CD4-positive, alpha-beta memory T cell (primary cell): ENCODE measurements at regions of chrX and their contacts with region 1.

Region 1: GRCh38 chrX:79107891-79108718 is 36.4 kb upstream of the GPR174 start:
- DNase-seq: peak in 4 of 5 donors; percentile 71 to 81 (median 75)
- H3K4me3 ChIP-seq: peak overlapping the region in 1 of 2 donors; percentile 28
- H3K4me3 Mint-ChIP-seq: peak overlapping the region; percentile 54 to 82 (median 74)
- H3K27ac ChIP-seq: peak overlapping the region; percentile 95
- H3K27ac Mint-ChIP-seq: peak overlapping the region; percentile 96 to 99 (median 97)
- H3K4me1 ChIP-seq: peaks cover 68% of the 10 kb centered on the region
- H3K4me1 Mint-ChIP-seq: peaks cover 27 to 70% (median 47%) of the 10 kb centered on the region in 4 donors
- H3K27me3 ChIP-seq: no peaks in the 10 kb centered on the region
- H3K27me3 Mint-ChIP-seq: no peaks in the 10 kb centered on the region

Region 2: GRCh38 chrX:78725287-78725686 is 382.8 kb before region 1 on chrX:
- CTCF ChIA-PET with region 1: no interaction called
- POLR2A ChIA-PET with region 1: no interaction called
- intact Hi-C with region 1: no loop called
- DNase-seq: no peak
- H3K4me3 ChIP-seq: no peak overlapping the region
- H3K4me3 Mint-ChIP-seq: no peak overlapping the region
- H3K27ac ChIP-seq: no peak overlapping the region
- H3K27ac Mint-ChIP-seq: no peak overlapping the region
- H3K4me1 ChIP-seq: no peaks in the 10 kb centered on the region
- H3K4me1 Mint-ChIP-seq: peaks cover 0 to 4% (median 0%) of the 10 kb centered on the region in 4 donors
- H3K27me3 ChIP-seq: no peaks in the 10 kb centered on the region
- H3K27me3 Mint-ChIP-seq: no peaks in the 10 kb centered on the region

Region 3: GRCh38 chrX:79089896-79090584 is 18.1 kb before region 1 on chrX:
- CTCF ChIA-PET with region 1: interaction called, 4 read pairs
- POLR2A ChIA-PET with region 1: interaction called, 42 read pairs
- intact Hi-C with region 1: no loop called
- DNase-seq: no peak
- H3K4me3 ChIP-seq: no peak overlapping the region
- H3K4me3 Mint-ChIP-seq: peak overlapping the region in 3 of 8 donors; percentile 3 to 43 (median 36)
- H3K27ac ChIP-seq: no peak overlapping the region
- H3K27ac Mint-ChIP-seq: peak overlapping the region; percentile 36 to 89 (median 78)
- H3K4me1 ChIP-seq: peaks cover 60% of the 10 kb centered on the region
- H3K4me1 Mint-ChIP-seq: peaks cover 13 to 57% (median 28%) of the 10 kb centered on the region in 4 donors
- H3K27me3 ChIP-seq: no peaks in the 10 kb centered on the region
- H3K27me3 Mint-ChIP-seq: no peaks in the 10 kb centered on the region

Region 4: GRCh38 chrX:79138658-79139241 is 30.6 kb after region 1 on chrX:
- CTCF ChIA-PET with region 1: interaction called, 12 read pairs
- POLR2A ChIA-PET with region 1: interaction called, 161 read pairs
- intact Hi-C with region 1: loop called (anchors 2 kb)
- DNase-seq: peak in 1 of 5 donors; percentile 24
- H3K4me3 ChIP-seq: no peak overlapping the region
- H3K4me3 Mint-ChIP-seq: peak overlapping the region; percentile 24 to 73 (median 48)
- H3K27ac ChIP-seq: peak overlapping the region; percentile 49
- H3K27ac Mint-ChIP-seq: peak overlapping the region; percentile 32 to 89 (median 84)
- H3K4me1 ChIP-seq: peaks cover 52% of the 10 kb centered on the region
- H3K4me1 Mint-ChIP-seq: peaks cover 22 to 59% (median 41%) of the 10 kb centered on the region in 4 donors
- H3K27me3 ChIP-seq: no peaks in the 10 kb centered on the region
- H3K27me3 Mint-ChIP-seq: no peaks in the 10 kb centered on the region

Region 5: GRCh38 chrX:79161655-79162054 is 53.5 kb after region 1 on chrX:
- CTCF ChIA-PET with region 1: no interaction called
- POLR2A ChIA-PET with region 1: interaction called, 41 read pairs
- intact Hi-C with region 1: loop called (anchors 1 kb)
- DNase-seq: peak; percentile 73 to 85 (median 79)
- H3K4me3 ChIP-seq: peak overlapping the region; percentile 45 to 55
- H3K4me3 Mint-ChIP-seq: peak overlapping the region; percentile 75 to 97 (median 94)
- H3K27ac ChIP-seq: peak overlapping the region; percentile 51
- H3K27ac Mint-ChIP-seq: peak overlapping the region; percentile 87 to 98 (median 95)
- H3K4me1 ChIP-seq: peaks cover 90% of the 10 kb centered on the region
- H3K4me1 Mint-ChIP-seq: peaks cover 37 to 85% (median 53%) of the 10 kb centered on the region in 4 donors
- H3K27me3 ChIP-seq: no peaks in the 10 kb centered on the region
- H3K27me3 Mint-ChIP-seq: no peaks in the 10 kb centered on the region

Region 6: DNA sequence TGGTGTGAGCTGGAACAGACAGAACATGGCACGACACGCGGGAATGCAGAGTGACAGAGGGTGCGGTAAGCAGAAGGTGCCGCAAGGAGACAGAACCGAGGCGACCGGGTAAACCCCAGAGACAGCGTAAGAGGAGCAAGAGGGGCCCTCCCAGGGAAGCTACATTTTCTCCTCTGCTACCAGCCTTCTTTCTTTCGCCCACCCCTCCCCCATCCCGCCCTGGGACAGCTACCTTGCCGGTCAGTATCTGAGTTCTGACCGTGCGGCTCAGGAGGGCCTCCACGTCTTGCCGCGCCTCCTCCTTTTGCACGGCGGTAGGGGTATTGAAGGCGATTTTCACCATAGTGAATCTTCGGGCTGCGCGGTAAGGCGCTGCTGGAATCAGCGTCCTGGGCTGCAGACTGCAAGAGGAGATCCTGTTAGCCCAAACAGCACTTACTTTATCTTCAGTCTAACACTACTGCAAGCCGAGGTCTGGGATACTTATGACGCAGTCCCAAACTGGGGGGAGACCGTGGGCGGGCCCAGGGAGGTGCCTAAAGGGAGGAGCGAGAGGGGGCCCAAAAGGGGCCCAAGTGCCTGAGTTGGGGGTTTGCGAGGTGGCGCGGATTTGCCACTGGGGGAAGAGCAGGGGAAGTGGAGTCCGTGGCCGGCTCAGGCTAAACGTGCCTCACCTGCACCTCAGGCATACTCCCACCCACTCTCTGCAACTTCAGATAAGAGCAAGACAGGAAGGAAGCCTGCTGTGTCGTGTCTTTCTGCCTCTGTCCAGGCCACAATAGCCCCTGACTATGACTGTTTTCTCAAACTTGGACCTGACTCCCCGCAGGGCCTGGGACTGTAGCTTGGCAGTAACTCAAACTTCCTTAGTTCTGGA is 259.0 kb after region 1 on chrX and contains the start of gene ITM2A:
- CTCF ChIA-PET with region 1: no interaction called
- POLR2A ChIA-PET with region 1: interaction called, 10 read pairs
- intact Hi-C with region 1: no loop called
- DNase-seq: peak; percentile 64 to 79 (median 71)
- H3K4me3 ChIP-seq: peak within 1 kb of the TSS; percentile 65 to 84
- H3K4me3 Mint-ChIP-seq: peak within 1 kb of the TSS; percentile 91 to 99 (median 94)
- H3K27ac ChIP-seq: peak within 1 kb of the TSS; percentile 95
- H3K27ac Mint-ChIP-seq: peak within 1 kb of the TSS; percentile 97 to 99 (median 97)
- H3K4me1 ChIP-seq: peaks cover 27% of the 10 kb centered on the region
- H3K4me1 Mint-ChIP-seq: peaks cover 17 to 27% (median 22%) of the 10 kb centered on the region in 4 donors
- H3K27me3 ChIP-seq: no peaks in the 10 kb centered on the region
- H3K27me3 Mint-ChIP-seq: no peaks in the 10 kb centered on the region
- total RNA-seq, gene ITM2A: 147 to 169 TPM